ENCODE measurements at regions of chr10 and their contacts with region 1.

Region 1: DNA sequence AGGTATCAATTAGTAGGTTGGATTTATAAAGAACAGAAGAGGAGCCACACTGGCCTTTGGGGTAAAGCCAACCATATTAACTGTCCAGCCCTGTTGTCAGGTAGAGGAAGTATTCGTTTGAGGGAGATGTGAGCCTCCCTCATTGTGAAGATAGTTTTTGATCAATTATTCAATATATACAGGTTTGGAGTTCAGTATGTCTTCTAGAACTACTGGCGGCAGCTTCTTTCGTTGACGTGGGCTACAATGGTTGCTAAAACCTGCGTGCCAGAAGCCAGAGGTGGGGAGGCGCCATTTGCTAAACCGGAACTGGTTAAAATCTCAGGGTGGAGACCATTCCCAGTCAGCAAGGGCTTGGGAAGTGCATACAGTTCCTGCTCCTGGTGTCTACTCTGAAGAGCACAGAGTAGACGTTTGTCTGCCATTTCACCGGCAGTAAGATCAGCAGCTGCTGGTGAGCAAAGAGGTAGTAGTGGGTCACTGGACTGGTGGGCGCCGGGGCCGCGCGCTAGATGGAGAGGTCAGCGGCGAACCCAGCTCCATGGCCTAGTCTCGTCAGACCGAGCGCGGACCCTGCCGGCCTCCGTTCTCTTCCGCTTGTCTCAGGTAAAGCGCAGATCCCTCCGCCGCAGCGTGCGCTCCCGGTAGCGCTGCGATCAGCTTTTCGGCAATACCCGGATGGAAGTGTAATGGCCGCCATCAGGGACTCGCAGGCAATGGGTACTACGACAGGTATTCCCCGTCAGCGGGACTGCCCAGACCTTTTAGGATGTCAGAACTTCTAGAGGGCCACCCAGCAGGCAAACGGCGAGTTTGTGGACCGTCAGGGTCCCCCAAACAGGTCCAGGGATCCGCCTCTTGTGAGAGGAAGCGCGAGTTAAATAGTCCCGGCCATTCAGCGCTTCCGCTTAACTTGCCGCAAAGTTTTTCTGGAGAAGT is at the start of gene ZNF518A:
- DNase-seq: peak; percentile 92
- ATAC-seq: peak; percentile 90
- H3K4me3 Mint-ChIP-seq: peak within 1 kb of the TSS; percentile 98
- H3K27ac Mint-ChIP-seq: peak within 1 kb of the TSS; percentile 98
- H3K4me1 Mint-ChIP-seq: peaks cover 18% of the 10 kb centered on the region
- H3K27me3 Mint-ChIP-seq: peaks cover 23% of the 10 kb centered on the region
- CTCF ChIP-seq: no peak
- total RNA-seq, gene ZNF518A: 13.4 to 15.2 TPM

Region 2: DNA sequence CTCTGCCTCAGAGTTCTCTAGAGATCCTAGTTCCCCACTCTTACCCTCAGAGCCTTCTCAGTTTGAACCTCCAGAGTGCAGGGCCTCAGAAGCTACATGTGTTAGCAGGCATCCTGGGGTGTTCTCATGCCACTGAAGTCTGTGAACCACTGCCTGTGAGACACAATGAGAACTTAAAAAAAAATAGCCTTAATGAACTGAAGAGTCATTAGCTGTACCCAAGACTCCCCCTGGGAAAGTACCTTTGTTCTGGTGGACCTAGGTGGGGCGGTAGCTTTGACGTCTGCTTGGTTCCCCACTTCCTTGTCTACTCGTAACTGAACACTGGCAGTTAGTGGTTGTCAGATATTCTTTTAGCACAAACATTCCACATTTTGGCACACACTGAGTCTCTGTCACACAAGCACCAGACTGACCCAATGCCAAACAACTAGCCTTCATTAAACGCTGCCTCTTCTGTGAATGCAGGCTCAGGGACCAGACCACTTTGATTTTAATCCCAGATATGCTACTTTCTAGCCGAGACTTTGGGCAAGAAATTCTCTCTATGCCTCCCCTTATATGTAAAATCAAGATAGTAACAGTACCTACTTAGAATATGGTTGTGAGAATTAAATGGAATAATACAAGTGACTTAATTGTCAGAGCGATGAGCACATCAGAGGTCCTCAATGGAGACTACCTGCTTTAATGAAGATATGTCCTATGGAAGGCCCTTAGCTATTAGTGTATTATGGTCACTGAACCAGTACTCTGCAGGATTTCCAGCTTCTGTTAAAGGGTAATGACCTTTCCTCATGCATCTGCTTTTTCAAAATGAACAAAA is 297.2 kb before region 1 on chr10:
- CTCF ChIA-PET with region 1: no interaction called
- POLR2A ChIA-PET with region 1: no interaction called
- intact Hi-C with region 1: no loop called
- DNase-seq: peak; percentile 69
- ATAC-seq: peak; percentile 87
- H3K4me3 Mint-ChIP-seq: peak overlapping the region; percentile 70
- H3K27ac Mint-ChIP-seq: peak overlapping the region; percentile 85
- H3K4me1 Mint-ChIP-seq: peaks cover 21% of the 10 kb centered on the region
- H3K27me3 Mint-ChIP-seq: no peaks in the 10 kb centered on the region
- CTCF ChIP-seq: no peak

Region 3: DNA sequence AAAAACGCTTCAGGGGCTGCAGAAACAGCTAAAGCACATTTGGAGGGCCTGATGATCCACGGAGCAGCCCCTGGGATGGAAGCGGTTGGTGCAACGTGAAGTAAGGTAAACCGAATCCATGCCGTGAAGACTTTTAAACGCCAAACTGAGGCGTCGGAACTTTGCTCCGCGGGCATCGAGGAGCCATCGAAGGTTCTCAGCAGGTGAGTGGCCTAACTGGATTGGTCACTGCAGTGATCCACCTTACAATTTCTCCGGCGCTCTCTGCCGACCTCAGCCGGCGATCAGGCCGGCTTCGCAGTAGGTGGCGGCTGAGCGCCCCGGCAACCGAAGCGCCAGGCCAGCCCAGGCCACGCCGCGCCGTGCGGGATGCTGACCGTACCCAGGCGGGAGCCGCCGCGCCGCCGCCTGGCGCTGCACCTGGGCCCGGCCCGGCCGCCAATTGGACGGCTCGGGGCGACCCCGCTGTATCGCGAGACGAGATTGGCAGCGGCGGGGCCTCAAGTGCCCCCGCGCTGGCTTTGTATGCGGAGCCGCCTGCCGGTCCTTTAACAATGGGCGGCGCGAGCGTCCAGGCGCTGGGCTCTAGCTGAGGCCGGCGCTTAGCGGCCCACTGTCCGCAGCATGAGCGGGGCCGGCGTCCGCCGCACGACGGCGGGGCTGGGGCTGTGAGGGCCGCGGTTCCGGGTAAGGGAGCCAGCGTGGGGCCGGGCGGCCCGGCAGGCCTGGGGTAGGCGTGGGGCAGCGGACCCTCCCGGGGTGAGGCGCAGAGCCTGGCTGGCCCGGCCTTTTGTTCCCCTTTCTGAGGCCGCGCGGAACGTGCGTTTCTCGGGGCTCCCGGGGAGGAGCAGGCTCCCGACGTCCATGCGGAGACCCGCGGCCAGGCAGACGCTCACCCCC is 86.4 kb before region 1 on chr10 and contains the start of gene CCNJ:
- CTCF ChIA-PET with region 1: no interaction called
- POLR2A ChIA-PET with region 1: interaction called, 17 read pairs
- intact Hi-C with region 1: loop called (anchors 10 kb)
- DNase-seq: peak; percentile 87
- ATAC-seq: peak; percentile 93
- H3K4me3 Mint-ChIP-seq: peak within 1 kb of the TSS; percentile 90
- H3K27ac Mint-ChIP-seq: peak within 1 kb of the TSS; percentile 86
- H3K4me1 Mint-ChIP-seq: peaks cover 35% of the 10 kb centered on the region
- H3K27me3 Mint-ChIP-seq: no peaks in the 10 kb centered on the region
- CTCF ChIP-seq: no peak
- total RNA-seq, gene CCNJ: 4.0 to 4.6 TPM

Region 4: GRCh38 chr10:96089670-96090462 is 39.8 kb before region 1 on chr10:
- CTCF ChIA-PET with region 1: interaction called, 11 read pairs
- POLR2A ChIA-PET with region 1: interaction called, 66 read pairs
- intact Hi-C with region 1: loop called (anchors 1 kb)
- DNase-seq: peak; percentile 96
- ATAC-seq: peak; percentile 91
- H3K4me3 Mint-ChIP-seq: peak overlapping the region; percentile 92
- H3K27ac Mint-ChIP-seq: peak overlapping the region; percentile 99
- H3K4me1 Mint-ChIP-seq: peaks cover 8% of the 10 kb centered on the region
- H3K27me3 Mint-ChIP-seq: peaks cover 20% of the 10 kb centered on the region
- CTCF ChIP-seq: no peak